Testis (tissue), 5 donors: ENCODE measurements at regions of chr6 and their contacts with region 1.

Region 1: GRCh38 chr6:123788319-123788718 is 15.3 kb upstream of the NKAIN2 start:
- DNase-seq: no peak
- H3K4me3 ChIP-seq: no peak overlapping the region
- H3K27ac ChIP-seq: no peak overlapping the region
- H3K4me1 ChIP-seq: no peaks in the 10 kb centered on the region
- H3K27me3 ChIP-seq: no peaks in the 10 kb centered on the region
- CTCF ChIP-seq: no peak
- POLR2A ChIP-seq: no peak

Region 2: GRCh38 chr6:123489589-123489988 is 298.7 kb before region 1 on chr6:
- intact Hi-C with region 1: no loop called
- DNase-seq: no peak
- H3K4me3 ChIP-seq: no peak overlapping the region
- H3K27ac ChIP-seq: no peak overlapping the region
- H3K4me1 ChIP-seq: no peaks in the 10 kb centered on the region
- H3K27me3 ChIP-seq: no peaks in the 10 kb centered on the region
- CTCF ChIP-seq: no peak
- POLR2A ChIP-seq: no peak

Region 3: GRCh38 chr6:124604719-124605118 is 816.4 kb after region 1 on chr6:
- intact Hi-C with region 1: loop called (anchors 10 kb)
- DNase-seq: no peak
- H3K4me3 ChIP-seq: no peak overlapping the region
- H3K27ac ChIP-seq: no peak overlapping the region
- H3K4me1 ChIP-seq: no peaks in the 10 kb centered on the region
- H3K27me3 ChIP-seq: no peaks in the 10 kb centered on the region
- CTCF ChIP-seq: no peak
- POLR2A ChIP-seq: no peak